Activated T-helper 2 cell treated with anti-CD3 and anti-CD28 coated beads, Interferon-gamma antibody, Interleukin-2, Interleukin-4, amounts not matched to agents 10 μg/mL and 5 μg/mL and 100 μg/mL, durations not matched to agents 14 hours and 24 hours and 36 hours (primary cell): ENCODE measurements at regions of chr10 and their contacts with region 1.

Region 1: DNA sequence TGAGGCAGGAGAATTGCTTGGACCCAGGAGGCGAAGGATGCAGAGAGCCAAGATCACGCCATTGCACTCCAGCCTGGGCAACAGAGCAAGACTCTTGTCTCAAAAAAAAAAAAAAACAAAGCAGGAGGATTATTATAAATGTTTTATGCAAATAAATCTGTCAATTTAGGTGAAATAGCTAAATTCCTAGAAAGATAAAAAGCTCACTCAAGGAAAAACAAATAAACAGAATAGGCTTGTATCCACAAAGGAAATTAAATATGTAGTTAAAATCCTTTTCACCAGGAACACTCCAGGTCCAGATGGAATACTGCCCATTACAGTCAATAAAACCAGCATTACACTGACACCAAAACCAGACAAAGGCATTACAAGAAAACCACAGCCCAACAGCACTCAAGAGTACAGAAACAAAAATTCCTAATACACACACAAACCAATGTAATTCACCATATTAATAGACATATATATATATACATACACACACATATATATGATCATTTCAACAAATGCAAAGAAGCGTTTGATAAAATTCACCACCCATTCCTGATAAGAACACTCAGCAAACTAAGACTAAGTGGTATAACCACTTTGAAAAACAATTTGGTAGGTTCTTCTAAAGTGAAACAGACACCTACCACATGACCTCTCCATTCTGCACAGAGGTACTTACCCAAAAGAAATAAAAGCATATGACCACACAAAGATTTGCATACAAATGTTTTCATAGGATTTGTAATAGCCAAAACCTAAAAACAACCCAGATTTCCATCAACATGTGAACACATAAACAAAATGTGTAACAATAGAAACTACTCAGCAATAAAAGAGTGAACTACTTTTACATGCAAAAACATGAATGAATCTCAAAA is 38.8 kb downstream of the ABI1 start:
- DNase-seq: no peak
- H3K4me3 Mint-ChIP-seq: no peak overlapping the region
- H3K27ac Mint-ChIP-seq: peak overlapping the region; percentile 40
- H3K4me1 Mint-ChIP-seq: peaks cover 26% of the 10 kb centered on the region
- H3K27me3 Mint-ChIP-seq: no peaks in the 10 kb centered on the region

Region 2: GRCh38 chr10:26528715-26529393 is 293.1 kb before region 1 on chr10:
- intact Hi-C with region 1: no loop called
- DNase-seq: no peak
- H3K4me3 Mint-ChIP-seq: no peak overlapping the region
- H3K27ac Mint-ChIP-seq: no peak overlapping the region
- H3K4me1 Mint-ChIP-seq: peaks cover 3% of the 10 kb centered on the region
- H3K27me3 Mint-ChIP-seq: no peaks in the 10 kb centered on the region

Region 3: GRCh38 chr10:26839966-26840627 is 18.2 kb after region 1 on chr10:
- intact Hi-C with region 1: loop called (anchors 2 kb)
- DNase-seq: no peak
- H3K4me3 Mint-ChIP-seq: no peak overlapping the region
- H3K27ac Mint-ChIP-seq: peak overlapping the region; percentile 65
- H3K4me1 Mint-ChIP-seq: peaks cover 42% of the 10 kb centered on the region
- H3K27me3 Mint-ChIP-seq: no peaks in the 10 kb centered on the region

Region 4: DNA sequence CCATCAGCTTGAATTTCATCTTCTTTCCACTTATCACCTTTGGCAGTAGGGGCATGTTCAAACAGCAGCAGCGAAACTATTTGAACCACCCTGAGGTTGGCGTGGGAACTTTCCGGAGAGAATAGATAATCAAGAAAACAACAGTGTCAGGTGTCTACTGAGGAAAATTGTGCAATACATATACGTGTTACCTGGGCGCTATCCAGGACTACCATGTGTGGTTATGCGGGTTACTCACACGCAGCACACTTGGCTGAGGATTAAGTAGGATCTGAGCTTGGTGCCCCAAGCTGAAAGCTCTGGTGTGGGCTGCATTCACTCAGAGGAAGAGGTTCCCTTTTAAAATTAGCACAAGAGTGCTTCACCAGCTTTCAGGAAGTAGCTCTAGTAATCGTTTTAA is 47.6 kb after region 1 on chr10:
- intact Hi-C with region 1: no loop called
- DNase-seq: no peak
- H3K4me3 Mint-ChIP-seq: no peak overlapping the region
- H3K27ac Mint-ChIP-seq: no peak overlapping the region
- H3K4me1 Mint-ChIP-seq: peaks cover 6% of the 10 kb centered on the region
- H3K27me3 Mint-ChIP-seq: peaks cover 9% of the 10 kb centered on the region